ENCODE measurements at regions of chr19 and their contacts with region 1.

Region 1: GRCh38 chr19:51338563-51339312 is 3.2 kb downstream of the VSIG10L start:
- DNase-seq: peak; percentile 83
- ATAC-seq: peak; percentile 64
- H3K4me3 Mint-ChIP-seq: peak overlapping the region; percentile 91
- H3K27ac Mint-ChIP-seq: peak overlapping the region; percentile 75
- H3K4me1 Mint-ChIP-seq: peaks cover 36% of the 10 kb centered on the region
- H3K27me3 Mint-ChIP-seq: no peaks in the 10 kb centered on the region
- CTCF ChIP-seq: peak; percentile 41

Region 2: DNA sequence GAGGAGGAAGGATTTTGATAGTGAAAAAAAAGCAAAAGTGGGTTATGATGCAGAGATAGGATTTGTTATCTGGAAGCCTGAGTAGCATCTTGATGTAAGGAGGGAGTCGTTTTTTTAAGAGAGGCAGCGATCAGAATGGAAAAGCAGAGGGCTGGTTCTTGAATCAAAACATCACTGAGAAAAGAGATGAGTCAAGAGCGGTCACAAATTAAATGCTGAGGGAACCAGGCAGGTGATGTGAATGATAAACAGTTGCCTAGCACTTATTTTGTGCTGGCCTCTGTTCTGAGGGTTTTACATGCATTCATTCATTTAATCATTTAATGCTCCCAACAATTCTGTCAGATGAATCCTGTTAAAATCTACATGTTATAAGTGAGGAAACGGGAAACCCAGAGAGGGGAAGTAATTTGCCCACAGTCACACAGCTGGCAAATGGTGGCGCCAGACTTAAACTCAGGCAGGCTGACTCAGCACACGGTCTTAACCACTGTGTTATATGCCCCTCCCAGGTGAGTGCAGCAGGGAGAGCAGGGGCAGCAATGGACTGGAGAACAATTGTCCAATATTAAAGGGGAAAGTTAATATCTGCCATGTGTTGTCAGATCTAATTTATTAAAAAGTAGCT is 66.4 kb before region 1 on chr19:
- CTCF ChIA-PET with region 1: no interaction called
- POLR2A ChIA-PET with region 1: no interaction called
- intact Hi-C with region 1: no loop called
- DNase-seq: no peak
- ATAC-seq: no peak
- H3K4me3 Mint-ChIP-seq: no peak overlapping the region
- H3K27ac Mint-ChIP-seq: no peak overlapping the region
- H3K4me1 Mint-ChIP-seq: peaks cover 2% of the 10 kb centered on the region
- H3K27me3 Mint-ChIP-seq: peaks cover 6% of the 10 kb centered on the region
- CTCF ChIP-seq: no peak

Region 3: DNA sequence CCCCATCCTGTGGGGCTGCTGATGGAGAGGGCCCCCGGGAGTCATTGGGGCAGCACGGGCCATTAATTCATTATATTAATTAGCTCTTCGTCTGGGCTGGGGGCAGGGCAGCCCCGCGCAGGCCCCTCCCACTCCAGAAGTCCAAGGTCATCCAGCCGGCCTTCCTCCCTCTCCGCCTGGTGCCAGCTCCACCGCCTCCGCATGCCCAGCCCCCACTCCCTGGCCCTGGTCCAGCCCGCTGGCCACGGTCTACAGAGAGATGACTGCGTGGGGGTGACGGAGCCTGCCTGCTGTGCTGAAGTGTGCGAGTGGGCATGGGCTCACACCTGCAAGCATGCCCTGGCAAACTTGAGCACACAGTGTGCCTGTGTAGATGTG is 18.5 kb before region 1 on chr19:
- CTCF ChIA-PET with region 1: no interaction called
- POLR2A ChIA-PET with region 1: no interaction called
- intact Hi-C with region 1: no loop called
- DNase-seq: no peak
- ATAC-seq: no peak
- H3K4me3 Mint-ChIP-seq: no peak overlapping the region
- H3K27ac Mint-ChIP-seq: no peak overlapping the region
- H3K4me1 Mint-ChIP-seq: no peaks in the 10 kb centered on the region
- H3K27me3 Mint-ChIP-seq: peaks cover 35% of the 10 kb centered on the region
- CTCF ChIP-seq: no peak

Region 4: GRCh38 chr19:51393959-51394836 is 55.5 kb after region 1 on chr19:
- CTCF ChIA-PET with region 1: interaction called, 5 read pairs
- POLR2A ChIA-PET with region 1: interaction called, 27 read pairs
- intact Hi-C with region 1: loop called (anchors 1 kb)
- DNase-seq: peak; percentile 76
- ATAC-seq: peak; percentile 87
- H3K4me3 Mint-ChIP-seq: peak overlapping the region; percentile 83
- H3K27ac Mint-ChIP-seq: peak overlapping the region; percentile 90
- H3K4me1 Mint-ChIP-seq: peaks cover 37% of the 10 kb centered on the region
- H3K27me3 Mint-ChIP-seq: no peaks in the 10 kb centered on the region
- CTCF ChIP-seq: no peak

Region 5: GRCh38 chr19:51422053-51422448 is 83.3 kb after region 1 on chr19:
- CTCF ChIA-PET with region 1: interaction called, 5 read pairs
- POLR2A ChIA-PET with region 1: interaction called, 49 read pairs
- intact Hi-C with region 1: loop called (anchors 1 kb)
- DNase-seq: peak; percentile 90
- ATAC-seq: peak; percentile 22
- H3K4me3 Mint-ChIP-seq: no peak overlapping the region
- H3K27ac Mint-ChIP-seq: no peak overlapping the region
- H3K4me1 Mint-ChIP-seq: peaks cover 34% of the 10 kb centered on the region
- H3K27me3 Mint-ChIP-seq: peaks cover 5% of the 10 kb centered on the region
- CTCF ChIP-seq: peak; percentile 90

Region 6: DNA sequence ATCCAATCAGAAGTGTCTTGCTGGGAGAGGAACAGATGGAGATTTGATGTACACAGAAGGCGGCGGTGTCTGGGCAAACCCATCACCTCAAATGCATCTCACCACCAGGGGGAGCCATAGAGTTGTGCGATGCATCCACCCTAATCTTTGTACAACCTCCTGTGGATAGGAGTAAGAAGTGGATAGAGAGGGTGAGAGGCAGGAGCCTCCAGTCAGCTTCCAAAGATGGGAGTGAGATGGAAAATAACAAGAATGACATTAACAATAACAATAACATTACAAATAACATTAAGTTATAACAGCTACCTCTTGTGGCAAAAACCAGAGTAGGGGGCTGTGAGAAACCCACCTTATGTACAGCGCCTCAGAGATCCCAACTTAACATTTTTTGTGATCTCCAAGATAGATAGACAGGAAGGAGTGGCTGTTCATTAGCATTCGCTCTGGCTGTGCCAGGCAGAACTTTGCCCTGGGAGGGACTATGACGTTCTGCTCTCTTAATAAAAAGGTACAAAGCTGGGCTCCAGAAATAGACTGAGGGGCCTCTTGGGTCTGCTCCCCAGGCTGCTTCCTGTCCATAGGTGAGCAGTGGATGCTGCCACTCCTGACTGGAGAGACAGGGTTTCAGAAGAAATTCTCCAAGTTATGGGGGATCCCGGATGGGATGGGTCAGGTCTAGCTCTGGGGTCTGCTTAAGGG is 134.4 kb after region 1 on chr19:
- CTCF ChIA-PET with region 1: interaction called, 3 read pairs
- POLR2A ChIA-PET with region 1: no interaction called
- intact Hi-C with region 1: loop called (anchors 1 kb)
- DNase-seq: peak; percentile 56
- ATAC-seq: peak; percentile 67
- H3K4me3 Mint-ChIP-seq: no peak overlapping the region
- H3K27ac Mint-ChIP-seq: no peak overlapping the region
- H3K4me1 Mint-ChIP-seq: peaks cover 10% of the 10 kb centered on the region
- H3K27me3 Mint-ChIP-seq: peaks cover 5% of the 10 kb centered on the region
- CTCF ChIP-seq: peak; percentile 40

Region 7: DNA sequence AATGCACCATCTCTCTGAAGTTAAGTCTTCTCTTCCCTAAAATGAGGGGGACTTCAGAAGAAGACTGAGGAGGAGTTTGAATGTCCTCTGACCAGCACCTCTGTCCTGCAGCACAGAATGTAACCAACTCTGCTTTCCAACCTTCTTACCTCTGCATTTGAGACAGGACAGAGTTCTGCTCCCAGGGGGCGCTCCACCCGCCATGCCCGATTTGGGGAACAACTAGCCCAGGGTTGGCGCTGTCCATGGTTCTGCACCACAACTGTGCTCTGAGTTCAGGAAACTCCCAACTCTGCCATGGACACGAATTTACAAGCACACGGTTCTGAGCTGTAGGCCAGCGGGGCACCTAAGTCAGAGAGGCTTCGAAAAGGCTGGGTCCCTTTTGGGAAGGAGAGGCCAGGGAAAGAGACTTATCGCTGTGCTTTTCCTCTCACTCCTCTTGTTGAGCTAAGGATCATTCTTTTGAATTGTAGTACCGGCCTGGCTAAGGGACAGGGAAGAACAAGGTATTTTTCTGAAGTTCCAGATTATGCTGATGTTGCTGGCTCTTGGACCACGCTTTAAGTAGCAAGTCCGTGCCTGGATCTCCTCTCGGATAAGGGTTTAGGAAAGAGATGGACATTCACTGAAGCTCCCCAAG is 269.3 kb after region 1 on chr19:
- CTCF ChIA-PET with region 1: no interaction called
- POLR2A ChIA-PET with region 1: interaction called, 3 read pairs
- intact Hi-C with region 1: loop called (anchors 2 kb)
- DNase-seq: peak; percentile 54
- ATAC-seq: no peak
- H3K4me3 Mint-ChIP-seq: no peak overlapping the region
- H3K27ac Mint-ChIP-seq: peak overlapping the region; percentile 88
- H3K4me1 Mint-ChIP-seq: peaks cover 63% of the 10 kb centered on the region
- H3K27me3 Mint-ChIP-seq: no peaks in the 10 kb centered on the region
- CTCF ChIP-seq: no peak

Region 8: GRCh38 chr19:51703575-51704515 is 365.1 kb after region 1 on chr19:
- CTCF ChIA-PET with region 1: interaction called, 3 read pairs
- POLR2A ChIA-PET with region 1: no interaction called
- intact Hi-C with region 1: loop called (anchors 5 kb)
- DNase-seq: peak; percentile 98
- ATAC-seq: peak; percentile 92
- H3K4me3 Mint-ChIP-seq: peak overlapping the region; percentile 88
- H3K27ac Mint-ChIP-seq: peak overlapping the region; percentile 85
- H3K4me1 Mint-ChIP-seq: peaks cover 33% of the 10 kb centered on the region
- H3K27me3 Mint-ChIP-seq: peaks cover 16% of the 10 kb centered on the region
- CTCF ChIP-seq: no peak